Left cardiac atrium (tissue), 4 donors: ENCODE measurements at regions of chr2 and their contacts with region 1.

Region 1: GRCh38 chr2:53939656-53940055 is 31.1 kb downstream of the PSME4 start:
- DNase-seq: no peak
- ATAC-seq: no peak

Region 2: DNA sequence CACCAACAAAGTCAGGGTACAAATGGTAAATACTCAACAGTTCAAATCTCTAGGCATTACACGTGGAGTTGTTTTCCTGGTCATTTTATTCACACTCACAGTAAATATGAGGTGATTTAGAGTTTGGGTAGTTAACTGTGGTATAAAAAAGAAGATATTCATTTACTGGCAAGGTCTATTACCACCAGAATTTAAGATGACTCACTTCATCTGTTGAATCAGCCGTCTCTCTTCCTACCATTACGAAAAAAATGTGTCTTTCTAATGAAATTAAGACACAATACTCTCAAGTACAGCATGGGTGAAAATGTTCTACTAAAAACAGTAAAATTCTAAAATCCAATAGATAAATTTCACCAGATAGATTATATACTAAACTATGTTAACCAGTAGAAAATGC is 58.9 kb before region 1 on chr2:
- intact Hi-C with region 1: loop called in 1 of 2 experiments (anchors 10 kb)
- DNase-seq: no peak
- ATAC-seq: no peak

Region 3: GRCh38 chr2:54015798-54016699 is 76.4 kb after region 1 on chr2:
- intact Hi-C with region 1: no loop called
- DNase-seq: no peak
- ATAC-seq: peak; percentile 15 to 68